ENCODE measurements at regions of chr3 and their contacts with region 1.

Region 1: GRCh38 chr3:141105828-141106628 is 54.9 kb downstream of the SPSB4 start:
- DNase-seq: peak; percentile 81
- H3K4me3 ChIP-seq: no peak overlapping the region
- H3K27ac ChIP-seq: no peak overlapping the region
- H3K4me1 ChIP-seq: no peaks in the 10 kb centered on the region
- CTCF ChIP-seq: peak; percentile 93

Region 2: DNA sequence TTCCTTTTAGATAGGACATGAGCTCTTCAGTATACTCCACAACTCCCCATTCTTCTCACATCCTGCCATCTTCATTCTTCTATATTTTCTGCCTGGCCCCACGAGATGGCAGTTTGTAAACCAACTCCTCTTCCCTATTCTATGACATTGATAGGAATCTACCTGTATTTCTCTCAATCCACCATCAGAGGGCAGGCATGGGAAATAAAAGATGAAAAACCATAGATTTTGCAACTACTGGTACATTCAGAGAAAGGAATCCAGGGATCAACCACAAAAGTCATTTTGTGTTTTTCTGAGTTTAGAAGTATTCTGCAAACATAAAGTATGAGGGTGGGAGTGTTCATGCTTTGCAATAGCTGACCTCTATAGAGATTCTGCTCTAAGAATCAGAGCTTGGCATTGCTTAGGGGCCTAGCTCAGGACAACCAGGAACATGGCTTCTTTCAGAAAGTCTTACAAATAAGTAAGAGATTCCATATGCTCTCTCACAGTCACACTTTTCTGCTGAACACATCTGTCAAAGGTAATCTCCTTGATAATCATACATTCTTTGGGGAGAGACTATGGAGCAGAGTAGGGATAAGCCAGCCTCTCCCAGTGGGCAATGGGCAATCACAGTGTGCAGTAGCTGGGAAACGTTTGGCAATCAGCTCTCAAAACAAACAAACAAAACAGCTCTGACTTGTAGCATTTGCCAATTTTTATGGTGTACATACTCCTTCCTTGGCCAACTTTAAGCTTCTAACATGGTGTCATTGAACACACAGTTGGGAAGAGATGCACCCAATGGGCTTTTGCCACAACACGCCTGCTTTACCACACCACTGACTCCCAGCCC is 207.5 kb before region 1 on chr3:
- CTCF ChIA-PET with region 1: no interaction called
- POLR2A ChIA-PET with region 1: no interaction called
- intact Hi-C with region 1: loop called (anchors 1 kb)
- DNase-seq: peak; percentile 62
- H3K4me3 ChIP-seq: no peak overlapping the region
- H3K27ac ChIP-seq: no peak overlapping the region
- H3K4me1 ChIP-seq: no peaks in the 10 kb centered on the region
- CTCF ChIP-seq: peak; percentile 88

Region 3: GRCh38 chr3:141000027-141000663 is 105.9 kb before region 1 on chr3:
- CTCF ChIA-PET with region 1: no interaction called
- POLR2A ChIA-PET with region 1: no interaction called
- intact Hi-C with region 1: loop called (anchors 5 kb)
- DNase-seq: peak; percentile 39
- H3K4me3 ChIP-seq: no peak overlapping the region
- H3K27ac ChIP-seq: no peak overlapping the region
- H3K4me1 ChIP-seq: no peaks in the 10 kb centered on the region
- CTCF ChIP-seq: peak; percentile 77

Measured in OCI-LY7 (cell line).